ENCODE measurements at regions of chr1 and their contacts with region 1.

Region 1: DNA sequence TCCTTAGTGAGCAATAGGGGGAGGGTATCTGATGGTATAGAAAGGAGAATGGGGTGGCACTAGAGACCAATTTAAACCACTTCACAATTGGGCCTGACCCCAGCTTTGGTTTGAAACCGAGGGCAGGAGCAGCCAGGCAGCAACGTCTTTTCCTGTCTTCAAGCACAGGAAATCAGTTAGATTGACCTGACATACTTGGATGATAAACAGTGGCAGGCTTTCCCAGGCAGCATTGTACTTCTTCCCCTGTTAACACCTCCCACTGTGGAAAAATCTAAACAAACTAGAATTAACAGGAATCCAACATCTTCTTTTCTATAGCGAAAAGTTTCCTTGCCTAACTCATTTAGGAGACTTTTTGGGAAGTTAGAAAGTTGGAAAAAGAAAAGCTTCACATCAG is 40.6 kb downstream of the SELL start:
- DNase-seq: no peak
- ATAC-seq: no peak
- H3K4me3 ChIP-seq: no peak overlapping the region
- H3K4me3 Mint-ChIP-seq: no peak overlapping the region
- H3K27ac ChIP-seq: no peak overlapping the region
- H3K27ac Mint-ChIP-seq: peak overlapping the region; percentile 38
- H3K4me1 ChIP-seq: peaks cover 28% of the 10 kb centered on the region
- H3K4me1 Mint-ChIP-seq: peaks cover 52% of the 10 kb centered on the region
- H3K27me3 ChIP-seq: no peaks in the 10 kb centered on the region
- H3K27me3 Mint-ChIP-seq: no peaks in the 10 kb centered on the region
- CTCF ChIP-seq: no peak

Region 2: DNA sequence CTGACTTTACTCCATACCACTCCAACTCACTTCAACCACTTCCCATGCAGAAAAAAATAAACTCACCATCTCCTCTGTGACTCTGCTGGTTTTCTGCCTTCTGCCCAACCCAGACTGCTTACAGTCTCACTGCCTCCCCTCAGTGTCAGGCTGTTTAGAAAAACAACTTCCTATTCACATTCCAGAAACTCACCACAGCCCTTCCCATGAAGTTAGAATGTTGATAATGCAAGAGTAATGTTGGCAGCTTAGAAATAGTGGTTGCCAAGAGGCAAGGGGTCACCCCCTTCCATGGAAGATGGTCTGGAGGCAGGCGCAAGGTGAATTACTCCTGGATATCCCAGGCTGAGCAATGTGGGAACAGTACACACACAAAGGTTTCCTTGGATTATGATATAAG is 40.8 kb before region 1 on chr1 and contains the start of gene SELP:
- CTCF ChIA-PET with region 1: no interaction called
- POLR2A ChIA-PET with region 1: no interaction called
- intact Hi-C with region 1: loop called in 1 of 2 experiments (anchors 2 kb)
- DNase-seq: no peak
- ATAC-seq: no peak
- H3K4me3 ChIP-seq: no peak within 1 kb of the TSS
- H3K4me3 Mint-ChIP-seq: no peak within 1 kb of the TSS
- H3K27ac ChIP-seq: no peak within 1 kb of the TSS
- H3K27ac Mint-ChIP-seq: no peak within 1 kb of the TSS
- H3K4me1 ChIP-seq: peaks cover 52% of the 10 kb centered on the region
- H3K4me1 Mint-ChIP-seq: peaks cover 44% of the 10 kb centered on the region
- H3K27me3 ChIP-seq: no peaks in the 10 kb centered on the region
- H3K27me3 Mint-ChIP-seq: no peaks in the 10 kb centered on the region
- CTCF ChIP-seq: no peak
- total RNA-seq, gene SELP: 0.43 to 0.81 TPM

Region 3: DNA sequence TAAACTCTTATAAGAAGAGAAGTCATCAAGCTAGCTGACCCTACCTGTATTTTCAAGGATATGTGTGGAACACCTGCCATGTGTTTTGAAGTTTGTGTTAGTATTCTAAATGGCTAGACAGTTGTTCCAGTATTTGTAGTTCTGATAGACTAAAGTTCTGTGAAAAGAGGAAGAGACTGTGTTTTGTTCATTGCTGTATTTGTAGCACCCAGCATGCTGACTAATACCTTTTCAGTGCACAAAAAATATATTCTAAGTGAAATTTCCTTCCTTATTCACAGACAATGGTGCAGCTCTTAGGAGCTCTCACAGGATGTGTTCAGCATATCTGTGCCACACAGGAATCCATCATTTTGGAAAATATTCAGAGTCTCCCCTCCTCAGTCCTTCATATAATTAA is 132.1 kb after region 1 on chr1:
- CTCF ChIA-PET with region 1: no interaction called
- POLR2A ChIA-PET with region 1: no interaction called
- intact Hi-C with region 1: no loop called
- DNase-seq: no peak
- ATAC-seq: no peak
- H3K4me3 ChIP-seq: no peak overlapping the region
- H3K4me3 Mint-ChIP-seq: no peak overlapping the region
- H3K27ac ChIP-seq: no peak overlapping the region
- H3K27ac Mint-ChIP-seq: no peak overlapping the region
- H3K4me1 ChIP-seq: no peaks in the 10 kb centered on the region
- H3K4me1 Mint-ChIP-seq: no peaks in the 10 kb centered on the region
- H3K27me3 ChIP-seq: no peaks in the 10 kb centered on the region
- H3K27me3 Mint-ChIP-seq: no peaks in the 10 kb centered on the region
- CTCF ChIP-seq: no peak

Measured in CD8-positive, alpha-beta T cell (primary cell).